Naive thymus-derived CD4-positive, alpha-beta T cell (primary cell): ENCODE measurements at regions of chr4 and their contacts with region 1.

Region 1: GRCh38 chr4:7101692-7102515 is 34.0 kb upstream of the GRPEL1 start:
- DNase-seq: peak; percentile 15 to 59 (median 30)
- ATAC-seq: peak; percentile 67
- H3K4me3 ChIP-seq: peak overlapping the region; percentile 78
- H3K4me3 Mint-ChIP-seq: peak overlapping the region; percentile 89 to 95 (median 92)
- H3K27ac ChIP-seq: no peak overlapping the region
- H3K27ac Mint-ChIP-seq: peak overlapping the region in 6 of 9 donors; percentile 59 to 83 (median 72)
- H3K4me1 ChIP-seq: peaks cover 12 to 15% of the 10 kb centered on the region in 2 donors
- H3K4me1 Mint-ChIP-seq: peaks cover 9 to 30% (median 17%) of the 10 kb centered on the region in 7 donors
- H3K27me3 ChIP-seq: no peaks in the 10 kb centered on the region
- H3K27me3 Mint-ChIP-seq: peaks cover 0 to 36% (median 0%) of the 10 kb centered on the region in 5 donors

Region 2: DNA sequence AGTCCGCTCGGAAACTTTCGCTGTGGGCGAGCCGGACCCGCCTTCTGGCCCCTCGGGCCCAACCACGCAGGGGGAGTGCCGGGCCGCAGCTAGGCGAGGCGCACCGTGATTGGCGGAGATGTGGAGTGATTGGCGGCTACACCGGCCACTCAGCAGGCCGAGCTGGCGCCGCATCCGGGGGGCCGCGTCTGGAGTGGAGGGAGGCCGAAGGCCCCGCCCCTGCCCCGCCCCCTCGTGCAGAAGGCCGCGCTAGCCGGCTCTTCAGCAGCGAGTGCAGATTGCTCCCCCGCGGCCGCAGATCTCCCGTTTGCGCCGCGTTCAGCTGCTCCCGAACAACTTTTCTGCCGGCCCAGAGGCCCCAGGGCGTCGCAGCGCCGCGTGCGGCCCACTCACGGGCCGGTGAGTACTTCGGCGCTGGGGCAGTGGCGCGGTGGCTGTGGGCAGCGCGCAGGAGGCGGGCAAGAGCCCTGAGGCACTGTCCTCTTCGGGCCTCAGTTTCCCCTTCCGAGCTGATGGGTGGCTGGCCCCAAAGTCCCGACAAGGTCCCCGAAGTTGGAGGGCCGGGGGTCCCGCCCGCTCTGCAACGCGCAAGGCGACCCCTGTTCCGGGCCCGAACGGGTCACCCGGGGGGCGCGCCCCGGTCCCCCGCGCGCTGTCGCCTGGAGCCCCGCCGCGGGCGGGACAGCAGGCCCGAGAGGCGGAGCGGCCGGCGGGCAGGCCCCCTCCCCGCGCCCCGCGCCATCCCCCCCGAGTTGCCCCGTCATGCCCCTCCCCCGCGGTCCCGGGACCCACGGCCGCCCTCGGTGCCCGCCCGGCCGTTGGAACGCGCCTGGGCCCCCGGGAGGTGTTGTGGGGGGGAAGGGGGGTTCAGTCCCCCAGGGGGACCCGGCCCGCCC is 832.0 kb before region 1 on chr4 and contains the start of gene WFS1:
- CTCF ChIA-PET with region 1: no interaction called
- POLR2A ChIA-PET with region 1: no interaction called
- intact Hi-C with region 1: loop called in 1 of 2 experiments (anchors 1 kb)
- DNase-seq: peak; percentile 91 to 97 (median 95)
- ATAC-seq: peak; percentile 100
- H3K4me3 ChIP-seq: peak within 1 kb of the TSS; percentile 82
- H3K4me3 Mint-ChIP-seq: peak within 1 kb of the TSS; percentile 85 to 92 (median 90)
- H3K27ac ChIP-seq: peak within 1 kb of the TSS; percentile 67
- H3K27ac Mint-ChIP-seq: peak within 1 kb of the TSS; percentile 24 to 84 (median 65)
- H3K4me1 ChIP-seq: peaks cover 8% of the 10 kb centered on the region in 2 donors
- H3K4me1 Mint-ChIP-seq: peaks cover 19 to 31% (median 25%) of the 10 kb centered on the region in 7 donors
- H3K27me3 ChIP-seq: no peaks in the 10 kb centered on the region
- H3K27me3 Mint-ChIP-seq: peaks cover 0 to 44% (median 3%) of the 10 kb centered on the region in 5 donors
- total RNA-seq, gene WFS1: 2.8 to 6.7 (median 4.4) TPM

Region 3: DNA sequence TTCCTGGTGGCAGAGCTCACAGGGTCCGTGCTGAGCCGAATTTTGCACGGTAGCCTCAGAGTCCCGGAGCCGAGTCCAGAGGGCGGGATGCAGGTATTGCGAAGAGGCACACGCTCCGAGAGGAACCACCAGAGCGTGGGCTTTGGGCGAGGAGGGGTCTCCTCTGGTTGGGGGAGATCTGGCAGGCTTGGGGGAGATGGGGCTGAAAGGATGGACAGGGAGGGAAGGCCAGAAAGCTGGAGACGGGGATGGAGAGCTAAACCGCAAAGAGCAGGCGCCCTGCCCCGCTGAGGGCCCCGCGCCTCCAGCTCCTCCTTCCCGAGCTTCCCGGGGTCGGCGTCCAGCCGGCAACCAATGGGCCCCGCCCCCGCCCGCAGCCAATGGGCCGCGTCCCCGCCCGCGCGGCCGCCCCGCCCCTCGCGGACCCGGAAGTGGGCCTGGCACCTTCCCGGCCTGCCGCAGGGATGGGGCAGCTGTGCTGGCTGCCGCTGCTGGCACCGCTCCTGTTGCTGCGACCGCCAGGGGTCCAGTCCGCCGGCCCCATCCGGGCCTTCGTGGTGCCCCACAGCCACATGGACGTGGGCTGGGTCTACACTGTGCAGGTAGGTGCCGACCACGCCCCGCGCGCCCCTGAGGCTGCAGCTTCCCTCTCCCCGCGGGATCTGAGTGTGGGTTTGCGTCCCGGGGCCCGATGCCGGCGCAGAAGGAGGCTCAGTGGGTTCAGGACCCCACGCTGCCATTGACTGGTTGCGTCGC is 527.0 kb before region 1 on chr4 and contains the start of gene MAN2B2:
- CTCF ChIA-PET with region 1: no interaction called
- POLR2A ChIA-PET with region 1: no interaction called
- intact Hi-C with region 1: loop called in 1 of 2 experiments (anchors 2 kb)
- DNase-seq: peak; percentile 68 to 92 (median 75)
- ATAC-seq: peak; percentile 96
- H3K4me3 ChIP-seq: peak within 1 kb of the TSS; percentile 92
- H3K4me3 Mint-ChIP-seq: peak within 1 kb of the TSS; percentile 84 to 94 (median 90)
- H3K27ac ChIP-seq: peak within 1 kb of the TSS; percentile 83
- H3K27ac Mint-ChIP-seq: peak within 1 kb of the TSS; percentile 68 to 91 (median 84)
- H3K4me1 ChIP-seq: peaks cover 5 to 9% of the 10 kb centered on the region in 2 donors
- H3K4me1 Mint-ChIP-seq: peaks cover 6 to 13% (median 8%) of the 10 kb centered on the region in 7 donors
- H3K27me3 ChIP-seq: no peaks in the 10 kb centered on the region
- H3K27me3 Mint-ChIP-seq: peaks cover 0 to 17% (median 0%) of the 10 kb centered on the region in 5 donors
- total RNA-seq, gene MAN2B2: 28.7 to 56.2 (median 39.4) TPM

Region 4: DNA sequence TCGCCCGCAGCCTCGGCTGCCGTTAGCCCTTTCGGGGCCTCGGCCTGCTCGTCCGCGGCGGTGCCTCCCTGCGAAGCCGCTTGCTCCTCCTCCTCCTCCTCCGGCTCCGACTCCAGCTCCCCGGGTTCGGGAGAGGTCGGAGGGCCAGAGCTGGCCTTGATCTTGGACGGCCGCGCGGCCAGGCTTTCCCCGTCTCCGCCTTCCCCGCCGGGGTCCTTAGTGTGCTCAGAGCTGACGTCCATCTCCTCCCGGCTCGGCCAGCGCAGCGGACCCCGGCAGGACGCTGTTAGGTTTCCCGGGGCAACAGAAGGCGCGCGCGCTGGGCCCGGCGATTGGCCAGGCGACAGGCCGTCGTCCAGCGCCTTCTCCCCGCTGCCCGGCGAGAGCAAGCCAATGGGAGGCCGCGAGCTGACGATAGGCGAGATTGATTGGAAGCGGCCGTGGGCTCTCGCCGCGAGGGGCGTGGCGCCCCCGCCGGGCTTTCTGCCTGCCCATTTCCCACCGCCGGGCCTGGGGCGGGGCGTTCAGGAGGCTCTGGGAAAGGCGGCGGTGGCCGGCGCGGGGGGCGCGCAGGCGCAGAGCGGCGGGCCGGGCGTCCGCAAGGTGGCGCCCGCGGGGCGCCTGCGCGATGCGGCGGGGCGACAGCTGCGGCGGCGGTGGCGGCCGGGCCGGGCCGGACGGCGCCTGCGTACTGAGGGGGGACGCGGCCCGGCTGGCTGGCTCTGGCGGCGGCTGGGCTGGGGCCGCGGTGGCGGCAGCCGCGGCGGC is 59.0 kb before region 1 on chr4 and contains the start of gene TADA2B:
- CTCF ChIA-PET with region 1: no interaction called
- POLR2A ChIA-PET with region 1: no interaction called
- intact Hi-C with region 1: loop called (anchors 1 kb)
- DNase-seq: peak; percentile 79 to 99 (median 88)
- ATAC-seq: peak; percentile 89
- H3K4me3 ChIP-seq: peak within 1 kb of the TSS; percentile 84
- H3K4me3 Mint-ChIP-seq: peak within 1 kb of the TSS; percentile 90 to 95 (median 92)
- H3K27ac ChIP-seq: peak within 1 kb of the TSS; percentile 85
- H3K27ac Mint-ChIP-seq: peak within 1 kb of the TSS; percentile 80 to 92 (median 89)
- H3K4me1 ChIP-seq: peaks cover 33 to 40% of the 10 kb centered on the region in 2 donors
- H3K4me1 Mint-ChIP-seq: peaks cover 38 to 58% (median 52%) of the 10 kb centered on the region in 7 donors
- H3K27me3 ChIP-seq: no peaks in the 10 kb centered on the region
- H3K27me3 Mint-ChIP-seq: peaks cover 0 to 15% (median 0%) of the 10 kb centered on the region in 5 donors
- total RNA-seq, gene TADA2B: 26.8 to 49.0 (median 41.5) TPM